PC-9 (cell line): ENCODE measurements at regions of chr10 and their contacts with region 1.

Region 1: DNA sequence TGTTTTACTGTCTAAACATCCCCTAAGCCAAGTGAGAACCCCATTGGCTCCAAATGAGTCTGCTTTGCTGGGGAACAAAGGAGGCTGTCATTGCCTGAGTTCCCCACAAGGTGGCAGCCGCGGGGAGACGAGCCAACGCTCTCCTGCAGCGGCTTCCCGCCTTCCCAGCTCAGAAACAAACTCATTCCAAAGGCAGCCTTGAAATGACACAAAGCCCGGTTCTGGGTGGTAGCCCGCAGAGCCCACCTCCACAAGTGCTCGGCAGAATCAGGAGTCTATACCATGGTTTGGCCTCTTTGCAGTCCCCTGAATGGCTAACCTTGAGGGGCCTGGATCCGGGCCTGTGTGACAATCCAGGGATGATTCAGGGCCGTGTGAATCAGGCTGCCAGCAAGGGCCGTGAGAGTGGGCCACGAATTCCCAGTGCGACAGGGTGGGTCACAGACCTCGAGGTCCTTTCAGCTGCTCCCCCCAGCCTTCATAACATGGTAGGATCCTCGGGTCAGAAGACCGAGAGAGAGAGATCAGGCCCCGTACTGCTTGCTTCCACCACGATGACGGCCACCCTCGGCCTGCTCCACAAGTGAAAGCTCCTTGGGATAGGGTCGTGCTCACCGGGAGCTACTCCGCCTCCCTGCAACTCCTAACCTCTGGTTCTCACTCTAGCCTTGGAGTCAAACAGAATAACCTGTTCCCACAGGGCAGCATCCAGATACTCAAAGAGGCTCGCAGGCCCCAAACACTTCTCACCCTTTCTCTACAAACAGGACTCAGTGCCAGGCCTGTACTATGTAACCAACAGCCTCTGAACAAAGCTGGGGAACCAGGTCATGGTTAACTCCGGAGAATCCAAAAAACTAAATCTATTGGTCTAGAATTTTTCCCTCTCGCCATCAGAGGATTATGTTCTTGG is 79.6 kb downstream of the DLG5 start:
- DNase-seq: peak; percentile 45 to 80
- H3K4me3 ChIP-seq: no peak overlapping the region
- H3K27ac ChIP-seq: no peak overlapping the region
- H3K4me1 ChIP-seq: peaks cover 25% of the 10 kb centered on the region
- H3K27me3 ChIP-seq: no peaks in the 10 kb centered on the region
- CTCF ChIP-seq: peak; percentile 99

Region 2: GRCh38 chr10:77898647-77899477 is 51.9 kb after region 1 on chr10:
- CTCF ChIA-PET with region 1: no interaction called
- POLR2A ChIA-PET with region 1: interaction called, 8 read pairs
- intact Hi-C with region 1: loop called (anchors 2 kb)
- DNase-seq: peak; percentile 86 to 90
- H3K4me3 ChIP-seq: no peak overlapping the region
- H3K27ac ChIP-seq: no peak overlapping the region; the same call in 1 of the 2 replicates
- H3K4me1 ChIP-seq: peaks cover 25% of the 10 kb centered on the region
- H3K27me3 ChIP-seq: no peaks in the 10 kb centered on the region
- CTCF ChIP-seq: no peak

Region 3: DNA sequence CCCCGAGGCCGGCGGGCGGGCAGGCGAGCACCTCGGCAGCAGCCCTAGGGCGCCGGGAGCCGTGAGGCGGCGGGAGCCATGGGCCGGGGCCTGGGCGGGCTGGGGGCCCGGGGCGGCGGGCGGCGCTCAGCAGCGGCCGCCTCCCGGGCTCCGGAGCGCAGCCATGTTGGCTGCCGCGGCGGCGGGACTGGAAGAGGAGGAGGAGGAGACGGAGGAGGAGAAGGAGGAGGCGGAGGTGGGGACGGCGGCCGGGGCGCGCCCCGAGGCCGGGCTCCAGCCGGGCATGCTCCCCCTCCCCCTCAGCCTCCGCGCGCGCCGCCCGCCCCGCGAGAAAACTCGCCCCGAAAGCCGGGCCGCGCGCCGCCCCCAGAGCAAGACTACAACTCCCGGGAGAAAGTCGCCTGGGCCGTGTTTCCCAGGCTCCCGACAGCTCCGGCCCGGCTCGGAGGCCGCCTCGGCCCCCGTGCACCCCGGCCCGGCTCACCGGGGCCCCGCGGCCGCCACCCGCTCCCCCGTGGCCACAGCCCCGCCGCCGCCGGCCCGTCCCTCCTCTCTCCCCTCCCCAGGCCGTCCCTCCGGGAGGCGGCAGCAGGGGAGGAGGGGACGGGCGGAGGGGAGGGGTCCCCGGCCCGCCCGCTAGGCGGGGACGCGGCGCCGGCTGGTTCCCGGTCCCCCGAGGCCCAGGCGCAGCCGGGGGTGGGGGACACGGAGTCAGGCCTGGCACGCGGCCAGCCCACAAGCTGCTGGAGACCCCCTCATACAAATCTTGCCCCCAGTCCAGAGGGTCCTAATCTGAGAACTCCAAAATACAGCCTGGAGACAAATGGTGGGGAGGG is 79.8 kb after region 1 on chr10 and contains the start of gene DLG5:
- CTCF ChIA-PET with region 1: no interaction called
- POLR2A ChIA-PET with region 1: no interaction called
- intact Hi-C with region 1: loop called (anchors 1 kb)
- DNase-seq: peak in 1 of 2 experiments; percentile 67
- H3K4me3 ChIP-seq: peak within 1 kb of the TSS; percentile 80
- H3K27ac ChIP-seq: no peak within 1 kb of the TSS
- H3K4me1 ChIP-seq: peaks cover 31% of the 10 kb centered on the region
- H3K27me3 ChIP-seq: no peaks in the 10 kb centered on the region
- CTCF ChIP-seq: no peak
- total RNA-seq, gene DLG5: 75.5 and 81.7 TPM in 2 replicates

Region 4: GRCh38 chr10:77970869-77971803 is 124.2 kb after region 1 on chr10:
- CTCF ChIA-PET with region 1: interaction called, 7 read pairs
- POLR2A ChIA-PET with region 1: interaction called, 3 read pairs
- intact Hi-C with region 1: loop called (anchors 2 kb)
- DNase-seq: peak in 1 of 2 experiments; percentile 38
- H3K4me3 ChIP-seq: no peak overlapping the region
- H3K27ac ChIP-seq: no peak overlapping the region
- H3K4me1 ChIP-seq: peaks cover 5% of the 10 kb centered on the region; the same call in 1 of the 2 replicates
- H3K27me3 ChIP-seq: no peaks in the 10 kb centered on the region
- CTCF ChIP-seq: no peak